ENCODE measurements at regions of chr3 and their contacts with region 1.

Region 1: DNA sequence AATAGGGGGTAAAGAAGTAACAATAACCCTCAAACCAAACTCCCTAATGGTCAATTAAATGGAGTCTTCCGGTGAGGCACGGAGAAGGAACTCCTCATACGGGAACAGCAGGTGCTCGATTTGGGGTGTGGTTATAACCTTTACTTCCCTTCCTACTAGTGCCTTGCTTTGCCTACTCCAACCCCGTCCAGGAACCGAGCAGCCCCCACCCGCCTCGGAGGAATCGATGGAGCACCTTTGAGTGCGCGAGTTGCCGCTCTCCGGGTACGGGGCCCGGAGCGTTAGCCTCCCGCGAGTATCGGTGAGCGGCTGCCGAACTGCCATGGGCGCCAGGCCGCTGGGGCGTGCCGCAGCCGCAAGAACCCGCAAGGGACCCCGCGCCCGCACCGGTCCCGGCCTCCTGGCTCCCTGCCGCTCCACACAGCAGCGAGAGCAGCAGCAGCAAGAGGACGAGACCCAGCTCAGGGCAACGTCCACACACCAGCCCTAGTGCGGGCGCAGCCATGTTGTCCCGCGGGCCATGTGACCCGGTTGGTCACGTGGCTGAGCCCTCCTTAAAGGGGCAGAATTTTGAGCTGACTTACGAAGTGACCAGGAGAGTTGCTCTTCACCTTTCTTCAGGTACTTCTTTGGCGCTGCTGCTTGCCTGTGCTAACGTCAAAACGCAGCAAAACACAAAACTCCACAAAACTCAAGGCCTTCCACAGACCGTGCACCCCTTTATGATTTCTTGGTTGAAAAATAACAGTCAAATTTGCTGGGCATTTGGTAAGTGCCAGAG is at the start of gene SUMF1:
- DNase-seq: peak; percentile 84
- H3K4me3 Mint-ChIP-seq: peak within 1 kb of the TSS; percentile 90
- H3K27ac Mint-ChIP-seq: peak within 1 kb of the TSS; percentile 87
- H3K4me1 Mint-ChIP-seq: peaks cover 14% of the 10 kb centered on the region
- H3K27me3 Mint-ChIP-seq: no peaks in the 10 kb centered on the region
- total RNA-seq, gene SUMF1: 5.1 to 5.6 TPM

Region 2: DNA sequence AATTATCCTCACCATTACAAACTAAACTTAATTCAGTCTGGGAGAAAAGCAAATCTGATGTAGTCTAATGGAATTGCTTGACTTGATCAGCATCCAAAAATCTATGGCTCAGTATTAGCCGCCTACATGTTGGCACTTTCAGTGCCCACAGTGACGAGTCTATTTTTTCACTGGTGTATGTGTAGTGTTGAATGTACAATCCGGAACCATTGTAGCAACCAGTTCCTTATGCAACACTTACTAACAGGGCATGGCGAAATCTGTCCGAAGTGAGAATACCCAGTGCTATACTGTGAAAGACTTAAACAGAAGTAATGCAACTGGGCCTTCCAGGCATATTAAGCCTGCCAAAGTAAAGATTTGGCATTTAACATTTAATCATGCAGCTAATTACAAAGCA is 649.1 kb before region 1 on chr3:
- CTCF ChIA-PET with region 1: no interaction called
- POLR2A ChIA-PET with region 1: no interaction called
- intact Hi-C with region 1: no loop called
- DNase-seq: no peak
- H3K4me3 Mint-ChIP-seq: no peak overlapping the region
- H3K27ac Mint-ChIP-seq: no peak overlapping the region
- H3K4me1 Mint-ChIP-seq: no peaks in the 10 kb centered on the region
- H3K27me3 Mint-ChIP-seq: no peaks in the 10 kb centered on the region

Region 3: DNA sequence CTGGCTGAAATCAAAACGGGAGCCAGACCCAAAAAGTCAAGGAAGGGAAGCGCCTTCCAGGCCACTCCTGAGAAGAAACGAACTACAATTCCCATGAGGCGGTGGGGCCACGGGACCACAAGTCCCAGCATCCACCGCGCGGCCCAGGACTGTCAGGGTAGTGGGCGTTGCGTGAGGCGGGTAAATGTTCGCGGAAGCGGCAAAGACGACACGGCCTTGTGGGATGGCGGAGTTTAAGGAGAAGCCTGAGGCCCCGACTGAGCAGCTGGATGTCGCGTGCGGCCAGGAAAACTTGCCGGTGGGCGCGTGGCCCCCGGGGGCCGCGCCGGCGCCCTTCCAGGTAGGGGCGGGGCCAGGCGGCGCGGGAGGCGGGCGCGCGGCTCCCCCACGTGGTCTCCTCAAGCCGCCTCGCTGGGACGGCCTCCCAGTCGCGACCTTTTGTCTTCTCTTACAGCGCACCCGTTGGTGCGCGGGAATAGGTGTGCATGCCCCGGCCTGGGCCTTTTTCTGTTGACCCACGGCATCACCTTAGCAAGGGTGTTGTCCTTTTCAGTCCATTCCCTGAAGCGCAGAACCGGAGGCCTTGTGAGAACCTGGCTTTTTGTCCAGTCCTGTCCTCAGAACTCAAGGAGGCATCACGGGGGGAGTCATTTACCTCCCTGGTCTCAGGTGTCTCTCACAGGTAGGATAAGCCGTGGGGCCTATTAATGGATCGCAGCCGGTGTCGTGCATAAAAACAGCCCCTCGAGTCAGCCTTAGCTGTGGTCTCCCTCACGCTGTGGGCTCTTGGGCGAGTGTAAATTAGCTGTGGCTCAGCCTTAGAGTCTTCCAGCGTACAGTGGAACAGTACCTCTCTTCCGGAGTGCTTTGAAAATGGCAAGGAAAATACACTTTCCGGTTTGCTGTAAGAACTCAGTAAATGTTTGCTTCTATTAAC is 163.5 kb before region 1 on chr3 and contains the start of gene SETMAR:
- CTCF ChIA-PET with region 1: no interaction called
- POLR2A ChIA-PET with region 1: interaction called, 3 read pairs
- intact Hi-C with region 1: loop called (anchors 1 kb)
- DNase-seq: peak; percentile 91
- H3K4me3 Mint-ChIP-seq: peak within 1 kb of the TSS; percentile 93
- H3K27ac Mint-ChIP-seq: peak within 1 kb of the TSS; percentile 96
- H3K4me1 Mint-ChIP-seq: peaks cover 23% of the 10 kb centered on the region
- H3K27me3 Mint-ChIP-seq: no peaks in the 10 kb centered on the region
- total RNA-seq, gene SETMAR: 11.7 to 13.8 TPM

Region 4: DNA sequence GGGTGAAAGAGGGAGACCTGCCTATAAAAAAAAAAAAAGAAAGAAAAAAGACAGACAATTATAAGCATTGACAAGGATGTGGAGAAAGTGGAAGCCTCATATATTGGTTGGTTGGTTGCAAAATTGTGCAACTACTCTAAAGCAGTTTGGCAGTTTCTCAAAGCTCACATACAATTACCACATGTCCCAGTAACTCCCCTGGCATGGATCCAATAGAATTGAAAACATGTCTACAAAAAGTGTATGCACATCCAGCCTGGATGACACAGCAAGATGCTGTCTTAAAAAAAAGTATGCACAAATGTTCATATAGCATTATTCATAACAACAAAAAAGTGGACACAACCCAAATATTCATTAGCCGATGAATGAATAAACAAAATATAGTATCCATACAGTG is 144.3 kb before region 1 on chr3:
- CTCF ChIA-PET with region 1: no interaction called
- POLR2A ChIA-PET with region 1: no interaction called
- intact Hi-C with region 1: no loop called
- DNase-seq: no peak
- H3K4me3 Mint-ChIP-seq: no peak overlapping the region
- H3K27ac Mint-ChIP-seq: no peak overlapping the region
- H3K4me1 Mint-ChIP-seq: no peaks in the 10 kb centered on the region
- H3K27me3 Mint-ChIP-seq: no peaks in the 10 kb centered on the region

Measured in activated CD4-positive, alpha-beta memory T cell treated with anti-CD3 and anti-CD28 coated beads for 36 hours (primary cell).